ENCODE measurements at regions of chr1 and their contacts with region 1.

Region 1: GRCh38 chr1:61043010-61043820 is 39.1 kb upstream of the NFIA start:
- DNase-seq: peak; percentile 95 to 98
- ATAC-seq: peak; percentile 94
- H3K4me3 ChIP-seq: peak overlapping the region; percentile 13 to 28
- H3K27ac ChIP-seq: peak overlapping the region; percentile 83 to 88
- H3K4me1 ChIP-seq: peaks cover 0 to 4% of the 10 kb centered on the region in 2 donors
- H3K27me3 ChIP-seq: no peaks in the 10 kb centered on the region

Region 2: DNA sequence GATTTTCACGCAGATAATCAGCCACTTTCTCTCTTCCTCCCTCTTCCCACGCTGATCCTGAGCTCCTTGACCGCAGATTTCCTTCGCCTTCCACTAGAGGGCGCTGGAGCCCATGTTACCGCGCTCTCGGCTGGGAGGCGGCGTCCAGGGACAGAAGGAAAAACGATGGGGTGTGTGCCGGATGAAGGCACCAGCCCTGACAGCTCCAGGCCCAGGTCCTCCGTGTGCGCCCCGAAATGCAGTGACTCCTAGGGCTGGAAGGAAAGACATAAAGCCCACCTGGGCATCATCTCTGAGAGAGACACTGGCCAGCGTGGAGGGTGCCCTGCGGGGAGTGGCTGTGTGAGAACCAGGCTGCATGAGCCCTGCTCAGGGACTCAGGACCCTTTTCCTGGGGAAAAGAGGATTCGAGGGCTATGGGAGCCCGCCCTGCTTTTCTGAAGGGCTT is 1071.7 kb before region 1 on chr1:
- intact Hi-C with region 1: loop called (anchors 2 to 10 kb)
- DNase-seq: peak; percentile 78 to 91
- ATAC-seq: peak; percentile 87
- H3K4me3 ChIP-seq: no peak overlapping the region
- H3K27ac ChIP-seq: no peak overlapping the region
- H3K4me1 ChIP-seq: no peaks in the 10 kb centered on the region
- H3K27me3 ChIP-seq: no peaks in the 10 kb centered on the region

Region 3: GRCh38 chr1:60281360-60281932 is 761.8 kb before region 1 on chr1:
- intact Hi-C with region 1: loop called (anchors 5 kb)
- DNase-seq: peak; percentile 66 to 75
- ATAC-seq: peak; percentile 91
- H3K4me3 ChIP-seq: no peak overlapping the region
- H3K27ac ChIP-seq: no peak overlapping the region
- H3K4me1 ChIP-seq: peaks cover 0 to 6% of the 10 kb centered on the region in 2 donors
- H3K27me3 ChIP-seq: no peaks in the 10 kb centered on the region

Region 4: DNA sequence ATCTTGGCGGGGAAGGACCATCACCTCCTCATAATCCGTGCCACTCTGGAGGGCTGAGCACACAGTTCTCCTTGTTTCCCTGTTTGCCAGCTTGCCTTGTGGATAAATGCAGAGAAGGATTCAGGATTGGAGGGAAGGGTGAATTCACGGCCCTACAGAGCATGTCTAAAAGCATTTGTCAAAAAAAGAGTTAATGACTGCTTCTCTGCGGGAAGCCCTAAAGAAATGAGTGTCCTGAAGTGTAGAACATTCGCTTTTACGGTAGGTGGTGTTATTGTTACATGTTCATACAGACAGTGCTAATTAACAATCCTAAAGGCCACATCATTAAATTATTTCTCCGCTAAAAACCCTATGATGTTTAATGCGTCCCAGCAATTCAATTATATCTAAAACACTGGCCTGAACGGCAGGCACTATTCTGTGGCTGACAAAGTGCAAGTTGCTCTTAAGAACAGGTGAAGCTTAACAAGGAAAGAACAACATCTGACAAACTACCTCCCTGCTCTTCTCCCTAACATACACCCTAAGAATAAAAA is 73.2 kb before region 1 on chr1:
- intact Hi-C with region 1: loop called (anchors 2 kb)
- DNase-seq: no peak
- ATAC-seq: peak; percentile 78
- H3K4me3 ChIP-seq: no peak overlapping the region
- H3K27ac ChIP-seq: peak overlapping the region; percentile 49 to 74
- H3K4me1 ChIP-seq: peaks cover 6 to 12% of the 10 kb centered on the region in 2 donors
- H3K27me3 ChIP-seq: no peaks in the 10 kb centered on the region

Region 5: GRCh38 chr1:60978421-60979357 is 64.5 kb before region 1 on chr1:
- intact Hi-C with region 1: loop called in 1 of 2 experiments (anchors 2 kb)
- DNase-seq: peak in 1 of 2 donors; percentile 59
- ATAC-seq: peak; percentile 45
- H3K4me3 ChIP-seq: no peak overlapping the region
- H3K27ac ChIP-seq: peak overlapping the region; percentile 54 to 82
- H3K4me1 ChIP-seq: peaks cover 1 to 13% of the 10 kb centered on the region in 2 donors
- H3K27me3 ChIP-seq: no peaks in the 10 kb centered on the region

Region 6: GRCh38 chr1:61190618-61191432 is 147.6 kb after region 1 on chr1:
- intact Hi-C with region 1: no loop called
- DNase-seq: no peak
- ATAC-seq: peak; percentile 48
- H3K4me3 ChIP-seq: peak overlapping the region in 1 of 2 donors; percentile 18
- H3K27ac ChIP-seq: peak overlapping the region; percentile 69 to 93
- H3K4me1 ChIP-seq: peaks cover 6 to 8% of the 10 kb centered on the region in 2 donors
- H3K27me3 ChIP-seq: no peaks in the 10 kb centered on the region

Region 7: GRCh38 chr1:61253059-61253735 is 210.0 kb after region 1 on chr1:
- intact Hi-C with region 1: no loop called
- DNase-seq: peak in 1 of 2 donors; percentile 81
- ATAC-seq: peak; percentile 80
- H3K4me3 ChIP-seq: no peak overlapping the region
- H3K27ac ChIP-seq: no peak overlapping the region
- H3K4me1 ChIP-seq: peaks cover 5 to 12% of the 10 kb centered on the region in 2 donors
- H3K27me3 ChIP-seq: no peaks in the 10 kb centered on the region

Measured in aorta (tissue), 5 donors.